BJ (cell line): ENCODE measurements at regions of chr16 and their contacts with region 1.

Region 1: DNA sequence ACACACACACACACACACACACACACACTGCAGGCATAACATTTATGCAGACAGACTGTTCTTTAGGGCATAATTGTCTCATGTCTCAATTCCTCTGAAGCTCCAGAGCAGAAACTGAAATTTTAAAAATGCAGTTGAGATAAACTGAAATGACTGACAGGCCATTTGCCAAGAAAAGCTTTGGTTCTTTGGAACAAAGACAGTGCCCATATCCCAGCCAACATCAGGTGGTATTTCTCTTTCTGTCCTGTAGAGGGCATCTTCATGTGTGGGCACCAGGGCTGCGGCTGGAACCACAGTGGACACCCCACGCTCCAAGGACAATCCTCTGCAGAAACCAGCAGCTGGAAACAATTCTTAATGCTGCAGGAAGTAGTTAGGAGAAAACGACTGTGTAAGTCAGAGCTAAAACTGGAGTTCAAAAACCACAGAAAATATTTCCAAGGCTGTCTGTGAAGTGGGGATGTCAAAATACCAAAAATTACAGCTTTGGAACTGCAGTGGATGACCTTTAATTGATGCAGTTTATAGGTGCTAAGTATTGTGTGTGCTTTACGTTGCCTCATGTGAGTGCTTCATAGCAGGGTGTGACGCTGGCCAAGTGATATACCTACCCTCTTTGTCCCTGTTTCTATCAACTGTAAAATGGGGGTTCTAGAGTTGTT is 10.6 kb upstream of the MEFV start:
- DNase-seq: peak; percentile 51
- H3K4me3 ChIP-seq: no peak overlapping the region
- H3K27me3 ChIP-seq: no peaks in the 10 kb centered on the region
- CTCF ChIP-seq: peak; percentile 85

Region 2: DNA sequence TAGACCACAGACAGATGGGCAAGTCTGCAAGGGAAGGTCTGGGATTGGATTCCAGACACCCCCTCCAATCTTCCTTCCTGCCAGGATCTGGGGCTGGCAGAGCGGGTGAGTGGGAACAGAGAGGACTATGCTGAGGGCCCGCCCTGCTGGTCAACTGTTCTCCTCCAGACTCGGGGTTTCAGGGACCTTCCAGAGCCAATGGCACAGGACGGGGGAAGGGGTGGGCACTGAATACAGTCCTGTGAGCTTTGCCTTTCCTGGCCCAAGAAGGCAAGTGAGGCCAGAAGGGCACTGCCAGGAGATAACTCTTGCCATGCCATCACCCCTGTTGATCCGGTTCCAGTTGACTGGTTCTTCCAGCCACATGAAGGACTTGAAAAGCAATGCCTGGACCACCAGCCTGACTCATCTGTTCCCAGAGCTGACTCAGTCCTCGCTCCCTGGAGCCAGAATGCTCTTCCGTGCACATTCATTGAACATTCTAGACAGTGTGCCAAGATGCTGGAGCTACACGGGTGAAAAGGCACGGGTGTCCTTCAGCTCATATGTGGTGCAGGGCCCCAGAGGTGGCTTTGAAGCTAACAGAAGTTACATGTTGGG is 10.0 kb before region 1 on chr16:
- CTCF ChIA-PET with region 1: interaction called, 14 read pairs
- POLR2A ChIA-PET with region 1: no interaction called
- DNase-seq: no peak
- H3K4me3 ChIP-seq: no peak overlapping the region
- H3K27me3 ChIP-seq: 0 out of 2 replicates have a peak, but pooled peaks cover 3% of the 10 kb centered on the region
- CTCF ChIP-seq: no peak

Region 3: GRCh38 chr16:3282730-3283524 is 15.9 kb after region 1 on chr16 and contains the start of gene ZNF263:
- CTCF ChIA-PET with region 1: interaction called, 11 read pairs
- POLR2A ChIA-PET with region 1: no interaction called
- DNase-seq: peak; percentile 90
- H3K4me3 ChIP-seq: peak within 1 kb of the TSS; percentile 74
- H3K27me3 ChIP-seq: no peaks in the 10 kb centered on the region
- CTCF ChIP-seq: no peak
- polyA plus RNA-seq, gene ZNF263: 12.9 and 14.2 TPM in 2 replicates

Region 4: DNA sequence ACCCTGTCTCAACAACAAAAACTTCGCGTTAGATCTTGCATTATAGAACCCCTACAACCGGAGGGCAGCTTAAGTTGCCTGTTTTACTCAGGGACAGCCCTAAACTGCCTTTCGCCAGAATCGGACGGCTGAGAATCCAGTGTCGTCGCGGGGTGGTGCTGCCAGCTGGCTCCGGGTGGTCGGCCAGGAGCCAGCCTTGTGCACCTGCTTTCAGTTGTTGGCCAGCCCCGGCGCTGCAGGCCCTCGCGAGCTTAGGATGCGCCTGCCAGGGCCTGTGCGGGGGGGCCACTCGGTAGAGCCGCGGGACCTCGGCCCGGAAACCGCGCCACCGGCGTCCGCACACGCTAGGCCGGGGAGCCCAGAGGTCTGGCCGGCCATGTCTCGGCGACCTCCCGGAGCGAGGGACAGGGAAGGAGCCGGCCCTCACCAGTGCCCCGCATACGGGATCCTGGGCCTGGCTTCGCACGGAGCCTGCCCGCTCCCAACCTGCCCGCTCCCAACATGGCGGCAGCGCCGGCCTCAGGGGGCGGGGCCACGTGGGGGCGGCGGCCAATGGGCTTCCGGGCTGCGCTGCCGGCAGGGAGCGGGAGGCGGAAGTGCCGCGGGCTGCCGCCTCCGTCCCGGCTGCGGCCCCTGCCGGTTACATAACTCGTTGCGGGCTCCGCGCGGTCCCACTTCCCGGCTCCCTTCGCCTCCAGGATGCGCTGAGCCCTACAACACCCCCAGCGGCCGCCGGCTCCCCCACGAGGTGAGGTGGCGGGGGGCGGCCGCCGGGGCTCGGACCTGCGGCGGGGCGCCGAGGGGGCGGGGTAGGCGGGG is 190.6 kb after region 1 on chr16:
- CTCF ChIA-PET with region 1: no interaction called
- POLR2A ChIA-PET with region 1: no interaction called
- DNase-seq: no peak
- H3K4me3 ChIP-seq: peak overlapping the region; percentile 97
- H3K27me3 ChIP-seq: no peaks in the 10 kb centered on the region
- CTCF ChIP-seq: peak; percentile 41

Region 5: DNA sequence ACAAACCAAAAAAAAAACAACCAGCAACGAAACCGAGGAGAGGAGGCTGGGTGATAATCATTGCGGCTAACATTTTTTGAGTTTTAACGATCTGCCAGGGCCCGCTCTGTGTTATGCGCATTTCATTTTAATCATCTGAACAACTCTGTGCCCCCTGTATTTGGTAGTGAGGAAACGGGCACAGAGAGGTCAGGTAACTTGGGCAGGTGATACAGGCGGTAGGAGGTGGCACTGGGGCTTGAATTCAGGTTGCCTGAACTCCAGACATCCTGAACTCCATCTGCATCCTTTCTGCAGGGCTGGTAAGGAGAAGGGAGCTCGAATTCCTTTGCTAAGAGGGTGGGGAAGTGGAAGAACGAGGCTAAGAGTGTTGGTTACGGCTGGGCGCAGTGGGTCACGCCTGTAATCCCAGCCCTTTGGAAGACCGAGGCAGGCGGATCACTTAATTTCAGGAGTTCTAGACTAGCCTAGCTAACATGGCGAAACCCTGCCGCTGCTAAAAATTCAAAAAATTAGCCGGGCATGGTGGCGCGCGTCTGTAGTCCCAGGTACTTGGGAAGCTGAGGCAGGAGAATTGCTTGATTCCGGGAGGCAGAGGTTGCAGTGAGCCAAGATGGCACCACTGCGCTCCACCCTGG is 234.9 kb after region 1 on chr16:
- CTCF ChIA-PET with region 1: interaction called, 10 read pairs
- POLR2A ChIA-PET with region 1: no interaction called
- DNase-seq: no peak
- H3K4me3 ChIP-seq: peak overlapping the region; percentile 78
- H3K27me3 ChIP-seq: no peaks in the 10 kb centered on the region
- CTCF ChIP-seq: no peak